H1 (cell line): ENCODE measurements at regions of chr16 and their contacts with region 1.

Region 1: GRCh38 chr16:24499193-24499814 is 40.1 kb upstream of the RBBP6 start:
- DNase-seq: peak; percentile 44 to 77
- H3K4me3 ChIP-seq: no peak overlapping the region
- H3K27ac ChIP-seq: no peak overlapping the region
- H3K4me1 ChIP-seq: peaks cover 0 to 5% (median 4%) of the 10 kb centered on the region in 4 experiments; a peak in 6 of 7 replicates
- H3K27me3 ChIP-seq: no peaks in the 10 kb centered on the region; a peak in 1 of 7 replicates
- CTCF ChIP-seq: peak; percentile 69 to 92 (median 92)
- EP300 ChIP-seq: no peak
- POLR2A ChIP-seq: no peak
- RAD21 ChIP-seq: peak; percentile 98 to 99

Region 2: DNA sequence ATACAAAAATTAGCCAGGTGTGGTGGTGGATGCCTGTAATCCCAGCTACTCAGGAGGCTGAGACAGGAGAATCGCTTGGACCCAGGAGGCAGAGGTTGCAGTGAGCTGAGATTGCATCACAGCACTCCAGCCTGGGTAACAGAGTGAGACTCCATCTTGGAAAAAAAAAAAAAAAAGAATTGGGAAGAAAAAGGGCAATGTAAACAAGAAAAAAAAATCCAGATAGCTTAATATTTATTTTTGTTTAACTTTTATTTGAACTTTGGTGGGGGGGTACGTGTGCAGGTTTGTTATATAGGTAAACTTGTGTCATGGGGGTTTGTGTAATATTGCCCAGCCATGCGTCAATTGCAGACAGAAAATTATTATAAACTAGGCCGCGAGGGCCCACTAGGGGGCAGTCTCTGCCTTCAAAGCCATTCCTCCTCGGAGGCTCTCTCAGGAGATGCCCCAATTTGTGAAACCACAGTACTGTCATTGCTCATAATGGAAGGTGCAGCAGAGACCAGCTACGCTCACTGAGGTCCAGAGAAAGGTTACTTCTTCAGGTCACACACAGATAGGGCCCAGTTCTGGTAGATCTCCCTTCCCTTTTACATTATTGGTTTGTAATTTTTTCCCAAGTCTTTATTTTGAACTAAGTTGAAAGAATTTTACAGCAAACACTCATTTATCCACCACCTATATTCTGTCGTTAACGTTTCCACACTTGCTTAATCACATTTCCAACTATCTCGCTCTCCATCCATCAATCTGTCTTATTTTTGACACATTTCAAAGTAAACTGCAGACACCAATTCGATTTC is 457.3 kb before region 1 on chr16:
- CTCF ChIA-PET with region 1: interaction called, 139 read pairs
- POLR2A ChIA-PET with region 1: interaction called, 4 read pairs
- DNase-seq: peak; percentile 36 to 88
- H3K4me3 ChIP-seq: no peak overlapping the region
- H3K27ac ChIP-seq: no peak overlapping the region
- H3K4me1 ChIP-seq: peaks cover 0 to 12% (median 6%) of the 10 kb centered on the region in 4 experiments; a peak in 5 of 7 replicates
- H3K27me3 ChIP-seq: no peaks in the 10 kb centered on the region
- CTCF ChIP-seq: peak; percentile 73 to 83 (median 75)
- EP300 ChIP-seq: no peak
- POLR2A ChIP-seq: no peak
- RAD21 ChIP-seq: peak; percentile 89 to 90

Region 3: DNA sequence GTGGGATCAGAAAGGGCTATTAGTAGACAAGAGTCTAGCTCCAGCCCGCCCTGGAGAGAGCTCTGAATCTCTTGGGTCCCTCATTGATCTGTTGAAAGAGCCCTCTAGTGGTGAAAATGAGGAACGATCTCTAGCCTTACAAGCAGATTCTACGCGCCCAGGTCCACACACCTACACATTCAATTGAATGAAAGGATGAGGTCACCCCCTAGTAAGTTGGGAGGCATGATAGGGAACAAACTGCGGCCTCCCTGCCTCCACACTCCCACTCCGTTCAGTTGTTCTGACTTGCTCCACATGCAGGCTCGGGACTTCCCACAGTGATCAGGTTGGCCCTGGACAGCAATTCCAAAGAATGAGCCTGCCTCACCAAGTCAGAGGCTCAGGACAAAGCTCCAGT is 246.1 kb before region 1 on chr16:
- CTCF ChIA-PET with region 1: interaction called, 53 read pairs
- POLR2A ChIA-PET with region 1: no interaction called
- DNase-seq: peak; percentile 33 to 54
- H3K4me3 ChIP-seq: no peak overlapping the region
- H3K27ac ChIP-seq: no peak overlapping the region
- H3K4me1 ChIP-seq: peaks cover 0 to 4% (median under 1%) of the 10 kb centered on the region in 4 experiments; a peak in 3 of 7 replicates
- H3K27me3 ChIP-seq: peaks cover 5 to 25% (median 15%) of the 10 kb centered on the region in 4 experiments
- CTCF ChIP-seq: peak; percentile 0 to 79 (median 79)
- EP300 ChIP-seq: no peak
- POLR2A ChIP-seq: no peak
- RAD21 ChIP-seq: peak; percentile 79 to 90

Region 4: DNA sequence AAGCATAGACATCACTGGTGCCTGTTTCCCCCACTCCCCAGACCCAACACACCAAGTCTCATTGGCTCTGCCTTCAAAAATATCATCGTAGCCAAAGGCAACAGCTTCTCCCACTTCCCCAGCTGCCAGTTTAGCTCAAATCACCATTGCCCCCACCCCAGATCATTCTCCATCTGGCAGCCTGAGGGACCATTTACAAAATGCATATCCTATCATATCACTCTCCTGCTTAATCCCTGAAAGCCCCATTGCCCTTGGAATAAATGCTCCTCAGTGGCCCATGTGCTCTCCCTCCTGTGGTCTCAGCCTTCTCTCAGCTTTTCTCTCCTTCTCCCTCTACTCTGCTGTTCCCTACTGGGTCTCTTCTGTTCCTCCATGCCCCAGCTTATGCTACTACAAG is 174.9 kb before region 1 on chr16:
- CTCF ChIA-PET with region 1: interaction called, 10 read pairs
- POLR2A ChIA-PET with region 1: no interaction called
- DNase-seq: no peak
- H3K4me3 ChIP-seq: no peak overlapping the region
- H3K27ac ChIP-seq: no peak overlapping the region
- H3K4me1 ChIP-seq: no peaks in the 10 kb centered on the region
- H3K27me3 ChIP-seq: no peaks in the 10 kb centered on the region; a peak in 1 of 7 replicates
- CTCF ChIP-seq: no peak
- EP300 ChIP-seq: no peak
- POLR2A ChIP-seq: no peak
- RAD21 ChIP-seq: no peak

Region 5: GRCh38 chr16:24409049-24409448 is 90.3 kb before region 1 on chr16:
- CTCF ChIA-PET with region 1: interaction called, 14 read pairs
- POLR2A ChIA-PET with region 1: no interaction called
- DNase-seq: no peak
- H3K4me3 ChIP-seq: no peak overlapping the region
- H3K27ac ChIP-seq: no peak overlapping the region
- H3K4me1 ChIP-seq: no peaks in the 10 kb centered on the region
- H3K27me3 ChIP-seq: no peaks in the 10 kb centered on the region
- CTCF ChIP-seq: peak; percentile 50 to 67 (median 57)
- EP300 ChIP-seq: no peak
- POLR2A ChIP-seq: no peak
- RAD21 ChIP-seq: peak; percentile 51 to 68

Region 6: DNA sequence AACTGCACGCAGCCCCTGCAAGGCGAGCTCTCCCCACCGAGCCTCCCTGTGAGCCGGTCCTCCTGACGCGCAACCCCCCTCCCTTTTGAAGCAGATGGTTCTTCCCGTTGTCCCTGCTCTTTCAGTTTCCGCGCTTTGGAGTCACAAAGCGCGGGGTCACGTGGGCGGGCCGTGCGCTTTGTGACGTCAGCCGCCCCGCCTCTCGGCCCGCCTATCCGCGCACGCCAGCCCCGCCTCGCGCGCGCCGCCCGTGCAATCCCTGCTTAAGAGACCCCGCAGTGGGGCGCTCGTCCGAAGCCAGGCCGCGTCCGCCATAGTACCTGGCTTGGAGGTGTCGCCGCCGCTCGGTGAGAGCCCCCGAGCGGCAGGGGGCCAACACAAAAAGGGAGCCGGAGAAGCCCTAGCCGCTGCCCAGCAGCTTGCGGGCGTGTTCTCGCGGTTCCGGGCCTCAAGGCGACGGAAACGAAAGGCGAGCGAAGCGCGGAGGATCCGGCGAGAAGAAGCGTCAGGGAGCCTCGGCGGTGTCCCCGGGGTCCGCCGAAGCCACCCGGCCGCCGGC is 40.1 kb after region 1 on chr16 and contains the start of gene RBBP6:
- CTCF ChIA-PET with region 1: no interaction called
- POLR2A ChIA-PET with region 1: no interaction called
- DNase-seq: peak; percentile 89 to 94
- H3K4me3 ChIP-seq: peak within 1 kb of the TSS; percentile 71 to 96 (median 94)
- H3K27ac ChIP-seq: peak within 1 kb of the TSS; percentile 97
- H3K4me1 ChIP-seq: 0 out of 7 replicates have a peak, but pooled peaks cover 0 to 2% (median 0%) of the 10 kb centered on the region in 4 experiments
- H3K27me3 ChIP-seq: no peaks in the 10 kb centered on the region
- CTCF ChIP-seq: peak in 1 of 3 experiments; percentile 23; a peak in 2 of 4 replicates
- EP300 ChIP-seq: peak; percentile 9 to 89; a peak in 2 of 3 replicates
- POLR2A ChIP-seq: peak; percentile 93 to 95
- RAD21 ChIP-seq: no peak
- total RNA-seq, gene RBBP6: 53.6 and 54.5 TPM in 2 replicates